ENCODE measurements at regions of chr20 and their contacts with region 1.

Region 1: DNA sequence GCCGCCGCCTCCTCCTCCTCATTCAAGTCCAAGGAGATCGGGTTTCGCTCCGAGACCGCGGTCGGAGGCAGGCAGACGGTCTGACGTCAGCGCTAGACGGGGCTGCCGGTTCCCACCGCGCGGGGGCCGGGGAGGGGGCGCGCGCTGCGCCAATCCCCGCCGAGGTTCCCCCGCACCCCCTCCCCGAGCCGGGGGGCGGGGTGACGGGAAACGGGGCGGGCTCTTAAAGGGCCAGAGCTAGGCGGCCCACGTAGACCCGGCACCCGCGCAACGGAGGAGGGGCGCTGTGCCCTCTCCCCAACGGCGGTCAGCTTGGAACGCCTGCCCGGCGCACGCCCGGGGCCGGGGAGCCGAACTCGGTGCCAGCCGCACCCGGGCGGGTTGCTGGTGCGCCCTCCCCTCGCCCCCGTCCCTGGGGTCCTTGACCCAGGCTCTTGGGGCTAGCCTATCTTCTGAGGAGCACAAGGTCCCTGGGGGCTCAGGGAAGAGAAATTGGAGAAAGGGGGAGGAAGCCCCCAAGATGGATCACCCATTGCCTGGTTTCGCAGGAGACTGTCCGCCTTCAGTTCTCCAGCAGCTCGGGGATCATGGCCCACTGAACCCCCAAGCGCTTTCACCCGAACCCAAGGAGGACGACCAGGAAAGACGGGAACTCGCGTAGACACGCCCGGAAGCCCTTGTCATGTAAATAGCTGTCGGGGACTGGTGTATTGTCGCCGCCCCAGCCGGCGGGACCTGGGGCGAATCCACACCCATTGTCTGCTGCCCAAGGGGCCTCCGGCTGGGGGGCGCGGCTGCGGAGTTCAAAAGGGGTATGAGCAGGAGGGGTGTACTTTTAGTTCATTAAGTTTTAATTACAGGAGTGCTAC is at the start of gene PMEPA1:
- DNase-seq: peak; percentile 89 to 94
- ATAC-seq: peak; percentile 73 to 83
- H3K4me3 ChIP-seq: peak within 1 kb of the TSS; percentile 81
- H3K27ac ChIP-seq: peak within 1 kb of the TSS; percentile 97 to 98
- H3K4me1 ChIP-seq: peaks cover 64% of the 10 kb centered on the region
- CTCF ChIP-seq: no peak; the same call in 2 of the 3 replicates
- EP300 ChIP-seq: peak; percentile 50 to 69; a peak in 2 of 5 replicates
- POLR2A ChIP-seq: peak; percentile 64
- RAD21 ChIP-seq: peak; percentile 4 to 40; a peak in 3 of 5 replicates
- polyA plus RNA-seq, gene PMEPA1: 131 and 150 TPM in 2 replicates

Region 2: GRCh38 chr20:57698117-57698866 is 11.9 kb before region 1 on chr20:
- CTCF ChIA-PET with region 1: interaction called, 27 read pairs
- POLR2A ChIA-PET with region 1: interaction called, 78 read pairs
- DNase-seq: peak; percentile 95 to 99
- ATAC-seq: peak; percentile 77 to 83
- H3K4me3 ChIP-seq: peak overlapping the region; percentile 29
- H3K27ac ChIP-seq: peak overlapping the region; percentile 92 to 97
- H3K4me1 ChIP-seq: peaks cover 95% of the 10 kb centered on the region
- CTCF ChIP-seq: no peak
- EP300 ChIP-seq: peak; percentile 94 to 95; a peak in 4 of 5 replicates
- POLR2A ChIP-seq: no peak
- RAD21 ChIP-seq: peak in 1 of 2 experiments; percentile 44; a peak in 1 of 5 replicates

Region 3: GRCh38 chr20:57772276-57773030 is 62.3 kb after region 1 on chr20:
- CTCF ChIA-PET with region 1: interaction called, 8 read pairs
- POLR2A ChIA-PET with region 1: interaction called, 25 read pairs
- DNase-seq: peak; percentile 94 to 98
- ATAC-seq: peak; percentile 94 to 98
- H3K4me3 ChIP-seq: peak overlapping the region; percentile 30; the same call in 1 of the 3 replicates
- H3K27ac ChIP-seq: peak overlapping the region; percentile 95 to 96
- H3K4me1 ChIP-seq: peaks cover 54% of the 10 kb centered on the region
- CTCF ChIP-seq: no peak
- EP300 ChIP-seq: peak; percentile 98 to 99
- POLR2A ChIP-seq: no peak
- RAD21 ChIP-seq: peak; percentile 61 to 83

Region 4: GRCh38 chr20:58112017-58112781 is 402.0 kb after region 1 on chr20:
- CTCF ChIA-PET with region 1: interaction called, 3 read pairs
- POLR2A ChIA-PET with region 1: interaction called, 10 read pairs
- DNase-seq: peak; percentile 53 to 58
- ATAC-seq: peak; percentile 88
- H3K4me3 ChIP-seq: no peak overlapping the region
- H3K27ac ChIP-seq: peak overlapping the region; percentile 70 to 83
- H3K4me1 ChIP-seq: peaks cover 35% of the 10 kb centered on the region
- CTCF ChIP-seq: no peak
- EP300 ChIP-seq: peak in 1 of 2 experiments; percentile 46; a peak in 1 of 5 replicates
- POLR2A ChIP-seq: no peak
- RAD21 ChIP-seq: no peak

Region 5: GRCh38 chr20:58179432-58180099 is 469.4 kb after region 1 on chr20:
- CTCF ChIA-PET with region 1: interaction called, 13 read pairs
- POLR2A ChIA-PET with region 1: interaction called, 6 read pairs
- DNase-seq: peak; percentile 48
- ATAC-seq: peak; percentile 89 to 95
- H3K4me3 ChIP-seq: peak overlapping the region; percentile 42
- H3K27ac ChIP-seq: peak overlapping the region; percentile 78 to 94
- H3K4me1 ChIP-seq: peaks cover 13% of the 10 kb centered on the region
- CTCF ChIP-seq: peak; percentile 97
- EP300 ChIP-seq: no peak
- POLR2A ChIP-seq: no peak
- RAD21 ChIP-seq: peak; percentile 91 to 99